B cell (primary cell): ENCODE measurements at regions of chr2 and their contacts with region 1.

Region 1: GRCh38 chr2:231674587-231675338 is 33.6 kb upstream of the PTMA start:
- DNase-seq: peak; percentile 88
- ATAC-seq: peak; percentile 37
- H3K4me3 ChIP-seq: peak overlapping the region in 2 of 5 experiments; percentile 13 to 34
- H3K4me3 Mint-ChIP-seq: peak overlapping the region; percentile 91
- H3K27ac ChIP-seq: peak overlapping the region; percentile 98 to 100
- H3K27ac Mint-ChIP-seq: peak overlapping the region; percentile 100
- H3K4me1 ChIP-seq: peaks cover 64 to 79% of the 10 kb centered on the region in 2 donors
- H3K4me1 Mint-ChIP-seq: peaks cover 69% of the 10 kb centered on the region
- H3K27me3 ChIP-seq: no peaks in the 10 kb centered on the region
- H3K27me3 Mint-ChIP-seq: no peaks in the 10 kb centered on the region
- CTCF ChIP-seq: peak; percentile 84

Region 2: DNA sequence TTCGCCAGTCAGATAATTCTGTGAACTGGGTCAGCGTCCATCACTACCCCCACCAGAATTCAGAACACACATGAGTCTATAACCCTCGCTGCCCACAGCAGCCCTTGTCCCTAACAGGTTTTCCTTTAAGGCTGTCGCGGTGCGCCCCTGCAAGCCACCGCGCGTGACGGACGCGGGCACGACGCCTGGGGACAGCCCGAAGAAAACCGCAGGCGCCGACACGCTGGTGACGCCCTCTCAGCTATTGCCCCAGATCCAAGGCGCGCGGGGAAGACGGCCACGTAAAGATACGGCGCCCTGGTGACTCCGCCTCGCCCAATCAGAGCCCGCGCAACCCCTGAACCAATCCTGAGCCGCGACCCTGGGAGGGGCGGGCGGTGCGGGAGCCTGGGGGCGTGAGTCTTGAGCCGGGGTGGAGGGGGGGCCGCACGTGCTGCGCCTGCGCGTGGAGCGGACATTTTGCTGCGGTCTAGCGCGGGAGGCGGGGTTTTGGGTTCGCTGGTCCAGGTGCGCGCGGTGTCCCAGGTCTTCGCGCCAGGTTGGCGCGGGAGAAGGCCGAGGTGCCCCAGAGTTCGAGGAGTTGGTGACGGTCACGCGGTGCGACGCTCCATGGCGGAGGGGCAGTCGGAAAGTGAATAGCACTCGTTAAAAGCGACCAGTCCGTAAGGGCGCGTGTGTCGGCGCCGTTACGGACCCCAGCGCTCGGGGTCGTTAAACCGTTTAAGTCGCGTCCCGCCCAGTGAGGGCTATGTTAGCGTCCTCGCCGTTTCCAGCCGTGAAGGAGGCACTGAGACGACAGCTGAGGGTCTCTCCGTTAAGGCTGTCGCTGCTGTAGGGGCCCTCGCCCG is 160.4 kb before region 1 on chr2:
- CTCF ChIA-PET with region 1: interaction called, 3 read pairs
- POLR2A ChIA-PET with region 1: no interaction called
- intact Hi-C with region 1: loop called (anchors 10 kb)
- DNase-seq: peak; percentile 99
- ATAC-seq: peak; percentile 98
- H3K4me3 ChIP-seq: peak overlapping the region; percentile 62 to 83 (median 75)
- H3K4me3 Mint-ChIP-seq: peak overlapping the region; percentile 94
- H3K27ac ChIP-seq: peak overlapping the region; percentile 92 to 93
- H3K27ac Mint-ChIP-seq: peak overlapping the region; percentile 98
- H3K4me1 ChIP-seq: peaks cover 11 to 13% of the 10 kb centered on the region in 2 donors
- H3K4me1 Mint-ChIP-seq: peaks cover 16% of the 10 kb centered on the region
- H3K27me3 ChIP-seq: no peaks in the 10 kb centered on the region
- H3K27me3 Mint-ChIP-seq: no peaks in the 10 kb centered on the region
- CTCF ChIP-seq: no peak

Region 3: DNA sequence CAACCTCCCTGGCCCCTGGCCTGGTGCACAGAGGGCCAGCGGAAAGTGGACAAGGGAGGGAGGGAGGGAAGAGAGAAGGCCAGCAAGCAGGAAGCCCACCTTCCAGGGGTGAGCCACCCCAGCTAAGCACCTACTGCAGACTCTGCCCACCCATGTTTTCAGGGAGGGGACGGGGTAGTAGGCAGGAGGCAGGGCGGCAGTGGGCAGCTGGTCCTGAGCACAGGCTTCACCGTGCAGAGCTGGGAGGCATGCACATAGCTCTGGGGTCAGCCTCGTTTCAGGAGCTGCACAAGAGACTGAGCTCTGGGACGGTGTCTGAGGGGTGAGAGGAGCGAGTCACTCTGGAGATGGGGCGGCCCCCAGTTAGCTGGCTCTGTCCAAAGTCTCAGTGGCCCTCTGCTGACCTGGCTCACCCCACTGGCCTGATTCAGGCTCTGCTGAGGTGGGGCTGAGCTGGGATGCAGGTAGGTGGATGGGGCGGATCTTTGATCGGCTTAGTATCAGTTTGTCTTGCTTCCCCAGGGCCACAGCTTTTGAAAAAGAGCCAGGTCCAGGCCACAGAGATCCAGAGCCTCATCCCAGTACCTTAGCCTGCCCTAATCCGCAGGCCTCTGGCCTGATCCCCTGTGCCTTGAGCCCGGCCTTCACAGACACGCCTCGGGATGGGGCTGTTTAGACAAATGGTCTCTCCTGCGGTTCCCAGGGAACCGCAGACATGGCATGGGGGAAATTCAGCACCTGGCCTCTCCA is 148.2 kb before region 1 on chr2:
- CTCF ChIA-PET with region 1: no interaction called
- POLR2A ChIA-PET with region 1: no interaction called
- intact Hi-C with region 1: no loop called
- DNase-seq: no peak
- ATAC-seq: no peak
- H3K4me3 ChIP-seq: no peak overlapping the region
- H3K4me3 Mint-ChIP-seq: no peak overlapping the region
- H3K27ac ChIP-seq: no peak overlapping the region
- H3K27ac Mint-ChIP-seq: no peak overlapping the region
- H3K4me1 ChIP-seq: peaks cover 14 to 20% of the 10 kb centered on the region in 2 donors
- H3K4me1 Mint-ChIP-seq: peaks cover 14% of the 10 kb centered on the region
- H3K27me3 ChIP-seq: peaks cover 0 to 28% (median 8%) of the 10 kb centered on the region in 4 experiments
- H3K27me3 Mint-ChIP-seq: peaks cover 32% of the 10 kb centered on the region
- CTCF ChIP-seq: no peak

Region 4: GRCh38 chr2:231621129-231621879 is 53.5 kb before region 1 on chr2:
- CTCF ChIA-PET with region 1: interaction called, 561 read pairs
- POLR2A ChIA-PET with region 1: interaction called, 11 read pairs
- intact Hi-C with region 1: no loop called
- DNase-seq: no peak
- ATAC-seq: no peak
- H3K4me3 ChIP-seq: no peak overlapping the region
- H3K4me3 Mint-ChIP-seq: no peak overlapping the region
- H3K27ac ChIP-seq: no peak overlapping the region
- H3K27ac Mint-ChIP-seq: peak overlapping the region; percentile 37
- H3K4me1 ChIP-seq: no peaks in the 10 kb centered on the region
- H3K4me1 Mint-ChIP-seq: peaks cover 3% of the 10 kb centered on the region
- H3K27me3 ChIP-seq: peaks cover 0 to 3% (median 1%) of the 10 kb centered on the region in 4 experiments
- H3K27me3 Mint-ChIP-seq: no peaks in the 10 kb centered on the region
- CTCF ChIP-seq: no peak

Region 5: GRCh38 chr2:231662028-231662810 is 12.5 kb before region 1 on chr2:
- CTCF ChIA-PET with region 1: interaction called, 170 read pairs
- POLR2A ChIA-PET with region 1: interaction called, 151 read pairs
- intact Hi-C with region 1: loop called (anchors 1 kb)
- DNase-seq: peak; percentile 100
- ATAC-seq: peak; percentile 76
- H3K4me3 ChIP-seq: peak overlapping the region; percentile 23 to 58 (median 49)
- H3K4me3 Mint-ChIP-seq: peak overlapping the region; percentile 79
- H3K27ac ChIP-seq: peak overlapping the region; percentile 90 to 98
- H3K27ac Mint-ChIP-seq: peak overlapping the region; percentile 96
- H3K4me1 ChIP-seq: peaks cover 44 to 56% of the 10 kb centered on the region in 2 donors
- H3K4me1 Mint-ChIP-seq: peaks cover 58% of the 10 kb centered on the region
- H3K27me3 ChIP-seq: no peaks in the 10 kb centered on the region
- H3K27me3 Mint-ChIP-seq: no peaks in the 10 kb centered on the region
- CTCF ChIP-seq: no peak

Region 6: GRCh38 chr2:231713730-231714430 is 39.1 kb after region 1 on chr2:
- CTCF ChIA-PET with region 1: interaction called, 785 read pairs
- POLR2A ChIA-PET with region 1: interaction called, 345 read pairs
- intact Hi-C with region 1: loop called (anchors 1 kb)
- DNase-seq: peak; percentile 90
- ATAC-seq: peak; percentile 18
- H3K4me3 ChIP-seq: no peak overlapping the region
- H3K4me3 Mint-ChIP-seq: peak overlapping the region; percentile 73
- H3K27ac ChIP-seq: peak overlapping the region; percentile 64 to 75
- H3K27ac Mint-ChIP-seq: peak overlapping the region; percentile 91
- H3K4me1 ChIP-seq: peaks cover 49 to 68% of the 10 kb centered on the region in 2 donors
- H3K4me1 Mint-ChIP-seq: peaks cover 66% of the 10 kb centered on the region
- H3K27me3 ChIP-seq: no peaks in the 10 kb centered on the region
- H3K27me3 Mint-ChIP-seq: no peaks in the 10 kb centered on the region
- CTCF ChIP-seq: peak; percentile 95